ENCODE measurements at regions of chr12 and their contacts with region 1.

Region 1: GRCh38 chr12:64256166-64256800 is 34.2 kb upstream of the KICS2 start:
- DNase-seq: no peak
- ATAC-seq: peak; percentile 53

Region 2: GRCh38 chr12:63838411-63838810 is 417.9 kb before region 1 on chr12:
- intact Hi-C with region 1: loop called (anchors 2 kb)
- DNase-seq: no peak
- ATAC-seq: no peak

Region 3: GRCh38 chr12:64124511-64125197 is 131.6 kb before region 1 on chr12:
- intact Hi-C with region 1: no loop called
- DNase-seq: no peak
- ATAC-seq: no peak